Heart right ventricle (tissue), 16 donors: ENCODE measurements at regions of chr3 and their contacts with region 1.

Region 1: DNA sequence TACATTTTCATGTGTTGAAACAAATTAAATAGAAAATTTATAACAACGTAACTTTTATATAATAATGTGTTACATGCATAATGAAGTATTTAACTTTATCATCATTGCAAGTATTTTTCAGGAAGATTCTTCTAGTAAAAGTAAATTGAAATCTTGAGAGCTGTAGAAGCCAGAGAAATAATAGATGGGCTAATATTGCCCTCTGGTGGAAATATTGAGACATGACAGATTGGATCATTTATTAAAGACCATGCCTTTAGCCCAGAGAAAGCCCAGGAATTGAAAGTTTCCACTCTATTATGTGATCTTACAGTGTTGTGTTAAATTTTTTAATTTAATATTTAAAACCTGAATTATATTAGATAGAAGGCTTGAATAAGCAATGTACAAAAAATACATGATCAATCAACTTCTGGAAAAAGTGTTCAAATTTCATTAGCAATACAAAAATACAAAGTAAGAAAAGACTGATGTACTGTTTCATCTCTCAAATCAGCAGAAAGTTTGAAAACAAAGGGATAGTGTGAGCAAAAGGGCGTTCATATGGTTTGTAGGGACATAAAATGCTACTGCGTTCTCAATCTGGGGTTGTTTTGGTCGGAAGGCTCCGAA is 52.7 kb upstream of the SPTSSB start:
- DNase-seq: no peak
- ATAC-seq: peak in 5 of 8 donors; percentile 43 to 70 (median 61)
- H3K4me3 ChIP-seq: no peak overlapping the region
- H3K27ac ChIP-seq: no peak overlapping the region
- H3K4me1 ChIP-seq: peaks cover 0 to 5% (median 0%) of the 10 kb centered on the region in 9 donors
- H3K27me3 ChIP-seq: peaks cover 0 to 4% (median 0%) of the 10 kb centered on the region in 7 donors
- CTCF ChIP-seq: peak; percentile 52 to 88 (median 77)

Region 2: DNA sequence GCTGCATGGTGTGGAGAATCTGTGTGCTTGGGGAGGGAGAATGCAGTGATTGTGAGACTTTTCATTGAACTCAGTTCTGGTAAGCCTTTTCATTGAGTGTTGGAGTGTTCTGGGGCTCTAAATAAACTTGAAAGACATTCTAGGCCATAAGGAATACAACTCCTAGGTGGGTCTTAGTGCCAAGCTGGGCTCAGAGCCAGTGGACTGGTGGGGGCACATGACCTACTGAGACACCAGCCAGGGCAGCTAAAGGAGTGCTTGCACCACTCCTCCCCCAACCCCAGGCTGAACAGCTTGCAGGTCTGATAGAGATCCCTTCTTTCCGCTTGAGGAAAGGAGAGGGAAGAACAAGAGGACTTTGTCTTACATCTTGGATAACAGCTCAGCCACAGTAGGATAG is 836.9 kb before region 1 on chr3:
- intact Hi-C with region 1: loop called in 1 of 10 experiments (anchors 10 kb)
- DNase-seq: no peak
- ATAC-seq: peak in 1 of 8 donors; percentile 71
- H3K4me3 ChIP-seq: no peak overlapping the region
- H3K27ac ChIP-seq: no peak overlapping the region
- H3K4me1 ChIP-seq: peaks cover 0 to 5% (median 0%) of the 10 kb centered on the region in 9 donors
- H3K27me3 ChIP-seq: no peaks in the 10 kb centered on the region
- CTCF ChIP-seq: no peak

Region 3: GRCh38 chr3:160686955-160687535 is 737.0 kb before region 1 on chr3:
- intact Hi-C with region 1: loop called in 2 of 10 experiments (anchors 5 kb)
- DNase-seq: no peak
- ATAC-seq: no peak
- H3K4me3 ChIP-seq: no peak overlapping the region
- H3K27ac ChIP-seq: no peak overlapping the region
- H3K4me1 ChIP-seq: no peaks in the 10 kb centered on the region
- H3K27me3 ChIP-seq: no peaks in the 10 kb centered on the region
- CTCF ChIP-seq: peak in 7 of 9 donors; percentile 28 to 53 (median 43)

Region 4: GRCh38 chr3:160707187-160707794 is 716.7 kb before region 1 on chr3:
- intact Hi-C with region 1: loop called in 6 of 10 experiments (anchors 5 to 10 kb)
- DNase-seq: peak in 1 of 2 donors; percentile 61
- ATAC-seq: peak; percentile 64 to 82 (median 79)
- H3K4me3 ChIP-seq: no peak overlapping the region
- H3K27ac ChIP-seq: no peak overlapping the region
- H3K4me1 ChIP-seq: no peaks in the 10 kb centered on the region
- H3K27me3 ChIP-seq: peaks cover 0 to 19% (median 0%) of the 10 kb centered on the region in 7 donors
- CTCF ChIP-seq: peak; percentile 31 to 78 (median 67)

Region 5: GRCh38 chr3:160941885-160942494 is 482.0 kb before region 1 on chr3:
- intact Hi-C with region 1: loop called in 2 of 10 experiments (anchors 10 kb)
- DNase-seq: peak in 1 of 2 donors; percentile 79
- ATAC-seq: peak in 7 of 8 donors; percentile 63 to 84 (median 77)
- H3K4me3 ChIP-seq: no peak overlapping the region
- H3K27ac ChIP-seq: no peak overlapping the region
- H3K4me1 ChIP-seq: peaks cover 0 to 7% (median 0%) of the 10 kb centered on the region in 9 donors
- H3K27me3 ChIP-seq: no peaks in the 10 kb centered on the region
- CTCF ChIP-seq: peak; percentile 73 to 94 (median 89)

Region 6: DNA sequence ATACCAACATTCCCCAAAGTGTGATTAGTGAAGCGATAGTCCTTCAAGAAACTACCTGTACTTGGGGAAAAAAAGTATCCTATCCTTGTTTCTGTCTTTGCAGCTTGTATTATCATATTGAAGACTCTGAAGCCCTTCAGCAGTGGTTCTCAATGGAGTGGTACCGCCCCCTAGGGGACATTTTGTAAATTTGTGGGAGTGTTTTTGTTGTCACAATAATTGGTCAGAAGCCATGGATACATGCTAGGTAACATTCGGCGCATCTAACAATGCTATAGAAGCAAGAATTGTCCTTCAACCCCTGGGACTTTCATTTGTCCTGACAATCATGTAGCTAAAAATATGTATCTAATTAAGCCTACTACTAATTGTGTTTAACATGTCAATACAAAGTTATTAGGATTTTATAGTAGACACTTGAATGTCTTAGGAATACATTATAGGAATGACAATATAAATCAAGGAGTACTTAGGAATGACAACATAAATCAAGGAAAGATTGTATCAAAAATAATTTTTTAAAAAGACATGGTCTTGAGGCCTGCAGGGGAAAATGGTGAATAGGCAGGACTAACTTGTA is 149.2 kb before region 1 on chr3:
- intact Hi-C with region 1: loop called in 9 of 10 experiments (anchors 1 to 5 kb)
- DNase-seq: no peak
- ATAC-seq: peak in 2 of 8 donors; percentile 39 to 50
- H3K4me3 ChIP-seq: no peak overlapping the region
- H3K27ac ChIP-seq: no peak overlapping the region
- H3K4me1 ChIP-seq: no peaks in the 10 kb centered on the region
- H3K27me3 ChIP-seq: no peaks in the 10 kb centered on the region
- CTCF ChIP-seq: peak; percentile 37 to 65 (median 56)

Region 7: GRCh38 chr3:161462138-161462537 is 38.1 kb after region 1 on chr3:
- intact Hi-C with region 1: no loop called
- DNase-seq: no peak
- ATAC-seq: no peak
- H3K4me3 ChIP-seq: no peak overlapping the region
- H3K27ac ChIP-seq: no peak overlapping the region
- H3K4me1 ChIP-seq: no peaks in the 10 kb centered on the region
- H3K27me3 ChIP-seq: no peaks in the 10 kb centered on the region
- CTCF ChIP-seq: no peak